Activated CD4-positive, alpha-beta T cell treated with anti-CD3 and anti-CD28 coated beads for 36 hours (primary cell): ENCODE measurements at regions of chr13 and their contacts with region 1.

Region 1: GRCh38 chr13:44484562-44485138 is 91.5 kb downstream of the TSC22D1 start:
- DNase-seq: no peak
- ATAC-seq: peak; percentile 44
- H3K4me3 Mint-ChIP-seq: peak overlapping the region; percentile 38
- H3K27ac Mint-ChIP-seq: peak overlapping the region; percentile 20
- H3K4me1 Mint-ChIP-seq: peaks cover 13% of the 10 kb centered on the region
- H3K27me3 Mint-ChIP-seq: no peaks in the 10 kb centered on the region

Region 2: GRCh38 chr13:44155422-44156293 is 329.0 kb before region 1 on chr13:
- CTCF ChIA-PET with region 1: no interaction called
- POLR2A ChIA-PET with region 1: no interaction called
- intact Hi-C with region 1: no loop called
- DNase-seq: no peak
- ATAC-seq: no peak
- H3K4me3 Mint-ChIP-seq: no peak overlapping the region
- H3K27ac Mint-ChIP-seq: no peak overlapping the region
- H3K4me1 Mint-ChIP-seq: no peaks in the 10 kb centered on the region
- H3K27me3 Mint-ChIP-seq: peaks cover 2% of the 10 kb centered on the region

Region 3: DNA sequence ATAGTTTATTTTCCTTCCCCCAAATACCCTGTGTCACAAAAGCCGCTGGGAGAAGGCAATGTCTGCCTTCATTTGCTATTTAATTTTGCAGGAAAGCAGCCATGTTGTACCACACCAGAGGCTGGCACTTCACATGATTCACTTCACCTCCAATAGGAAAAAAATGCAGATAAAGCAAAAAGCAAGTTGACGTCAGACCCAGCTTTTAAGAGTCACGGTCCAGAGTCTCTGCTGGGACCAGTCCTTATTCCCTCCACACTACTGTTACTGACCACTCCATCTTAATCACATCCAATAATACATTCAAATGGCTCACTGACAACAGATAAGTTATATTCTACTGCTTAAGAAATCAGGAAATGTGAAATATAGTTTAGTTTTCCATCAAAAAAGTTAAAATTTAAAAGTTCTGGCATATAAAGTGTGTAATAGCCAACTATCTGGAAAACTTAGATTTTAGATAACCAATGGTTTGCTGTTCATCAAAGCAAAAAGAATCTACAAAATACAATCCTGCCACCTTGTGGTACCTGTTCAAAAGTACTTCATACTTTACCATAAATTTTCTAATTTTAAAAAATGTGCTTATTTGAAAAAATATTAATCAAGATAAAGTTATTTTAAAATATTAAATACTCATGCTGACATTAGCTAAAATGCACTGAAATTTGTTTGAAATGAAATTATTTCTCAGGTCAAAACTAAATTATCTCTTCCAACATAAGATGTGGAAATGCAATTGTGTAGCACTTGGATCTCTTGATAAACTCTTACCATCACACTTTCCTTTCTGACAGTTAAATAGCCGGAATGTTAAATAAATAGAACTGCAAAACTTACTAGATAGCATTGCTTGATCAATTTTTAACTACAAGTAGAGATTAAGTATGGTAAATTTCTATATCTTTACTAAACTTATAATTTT is 13.8 kb before region 1 on chr13:
- CTCF ChIA-PET with region 1: interaction called, 22 read pairs
- POLR2A ChIA-PET with region 1: interaction called, 3 read pairs
- intact Hi-C with region 1: no loop called
- DNase-seq: no peak
- ATAC-seq: no peak
- H3K4me3 Mint-ChIP-seq: no peak overlapping the region
- H3K27ac Mint-ChIP-seq: no peak overlapping the region
- H3K4me1 Mint-ChIP-seq: no peaks in the 10 kb centered on the region
- H3K27me3 Mint-ChIP-seq: no peaks in the 10 kb centered on the region

Region 4: DNA sequence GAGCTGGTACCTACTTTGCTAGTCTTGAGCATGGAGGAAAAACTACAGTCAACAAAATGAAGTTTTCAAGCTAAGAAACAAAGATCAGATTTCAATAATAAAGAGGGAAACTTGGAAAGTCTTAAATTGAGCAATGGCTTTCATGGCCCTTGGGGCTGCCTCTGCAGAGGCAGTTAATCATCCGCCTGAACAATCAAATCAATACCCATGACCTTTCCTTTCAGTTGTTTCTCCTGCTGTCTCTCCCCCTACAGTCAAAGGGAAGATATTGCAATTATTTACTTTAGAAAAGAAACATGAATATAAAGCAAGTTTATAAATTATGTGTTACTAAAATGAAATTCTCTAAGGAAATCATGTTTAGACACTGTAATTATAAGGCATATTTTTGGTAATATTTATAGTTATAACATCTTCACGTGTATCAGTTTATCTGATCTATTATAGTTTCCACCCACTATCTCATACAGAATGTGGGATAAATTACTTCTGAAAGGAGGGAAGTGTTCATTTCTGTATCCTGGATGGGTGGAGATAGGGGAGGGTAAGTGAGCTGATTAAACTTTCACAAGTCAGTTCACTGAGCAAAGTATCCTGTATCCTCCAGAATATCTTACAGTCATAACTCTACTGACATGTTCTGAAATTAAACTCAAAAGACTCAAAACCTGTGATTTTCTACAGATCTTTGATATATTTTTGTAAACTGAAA is 163.9 kb after region 1 on chr13:
- CTCF ChIA-PET with region 1: interaction called, 4 read pairs
- POLR2A ChIA-PET with region 1: no interaction called
- intact Hi-C with region 1: loop called (anchors 1 to 2 kb)
- DNase-seq: peak; percentile 25
- ATAC-seq: peak; percentile 85
- H3K4me3 Mint-ChIP-seq: no peak overlapping the region
- H3K27ac Mint-ChIP-seq: peak overlapping the region; percentile 37
- H3K4me1 Mint-ChIP-seq: peaks cover 23% of the 10 kb centered on the region
- H3K27me3 Mint-ChIP-seq: peaks cover 26% of the 10 kb centered on the region

Region 5: DNA sequence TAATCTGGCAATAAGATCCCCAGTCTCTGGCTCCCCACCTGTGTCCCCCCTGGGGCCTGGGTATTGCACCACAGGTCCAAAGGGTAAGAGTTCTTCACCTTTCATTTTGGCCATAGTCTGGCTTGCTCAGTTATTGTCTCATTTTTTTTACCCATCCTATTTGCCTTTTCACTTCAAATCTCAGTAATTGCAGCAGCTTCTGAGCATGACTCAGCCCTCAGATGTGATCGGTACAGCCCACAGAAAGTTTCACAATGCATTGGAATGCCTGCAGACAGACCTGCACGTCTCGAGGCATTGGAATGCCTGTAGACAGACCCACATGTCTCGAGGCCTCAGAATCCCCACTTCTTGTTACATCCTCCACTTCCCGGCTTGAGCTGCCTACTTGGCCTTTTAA is 331.0 kb after region 1 on chr13:
- CTCF ChIA-PET with region 1: no interaction called
- POLR2A ChIA-PET with region 1: no interaction called
- intact Hi-C with region 1: loop called in 1 of 2 experiments (anchors 5 kb)
- DNase-seq: peak; percentile 70
- ATAC-seq: peak; percentile 85
- H3K4me3 Mint-ChIP-seq: no peak overlapping the region
- H3K27ac Mint-ChIP-seq: no peak overlapping the region
- H3K4me1 Mint-ChIP-seq: peaks cover 32% of the 10 kb centered on the region
- H3K27me3 Mint-ChIP-seq: peaks cover 22% of the 10 kb centered on the region

Region 6: GRCh38 chr13:44879463-44880058 is 394.9 kb after region 1 on chr13:
- CTCF ChIA-PET with region 1: interaction called, 27 read pairs
- POLR2A ChIA-PET with region 1: no interaction called
- intact Hi-C with region 1: loop called (anchors 1 kb)
- DNase-seq: peak; percentile 45
- ATAC-seq: no peak
- H3K4me3 Mint-ChIP-seq: no peak overlapping the region
- H3K27ac Mint-ChIP-seq: no peak overlapping the region
- H3K4me1 Mint-ChIP-seq: peaks cover 5% of the 10 kb centered on the region
- H3K27me3 Mint-ChIP-seq: peaks cover 5% of the 10 kb centered on the region

Region 7: DNA sequence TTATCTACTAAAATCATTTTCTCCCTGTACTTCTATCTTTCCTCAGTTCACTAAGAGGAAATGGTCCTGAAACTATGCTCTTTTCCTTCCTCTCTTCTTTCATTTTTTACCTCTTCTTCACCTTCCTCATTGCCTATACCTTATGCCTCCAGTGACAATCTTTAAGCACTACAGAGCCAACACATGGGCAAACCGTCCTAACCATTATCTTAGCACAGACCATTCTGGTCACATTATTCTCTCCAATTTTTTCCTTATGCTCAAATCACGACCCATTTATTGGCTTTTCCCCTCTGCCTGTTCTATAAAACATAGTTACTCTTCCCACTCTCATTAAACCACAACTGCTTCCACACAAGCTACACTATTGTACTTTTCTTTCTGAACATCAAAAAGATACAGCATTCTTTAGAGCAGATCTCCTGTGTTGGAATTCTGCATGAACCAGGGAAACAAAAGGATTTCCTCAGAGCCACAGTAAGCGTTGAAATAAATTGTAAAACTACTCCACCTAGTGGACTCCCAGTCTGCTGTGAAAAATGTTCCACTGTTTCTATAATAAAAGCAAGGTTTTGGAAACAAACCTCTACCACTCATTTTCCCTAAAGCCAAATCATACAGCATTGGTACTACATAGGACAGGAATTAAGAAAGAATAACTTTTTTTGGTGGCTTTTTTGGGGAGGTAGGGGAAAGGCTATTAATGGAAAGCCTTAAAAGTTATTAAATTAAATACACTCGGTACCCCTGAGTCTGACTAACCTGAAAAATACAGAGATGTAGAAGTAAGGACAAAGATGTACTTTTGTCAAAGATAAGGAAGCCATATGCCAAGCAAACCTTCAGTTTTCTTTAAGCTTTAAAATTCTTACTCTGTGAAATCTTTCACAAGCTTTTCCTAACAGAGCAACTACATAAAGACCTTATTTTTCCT is 485.2 kb after region 1 on chr13:
- CTCF ChIA-PET with region 1: interaction called, 11 read pairs
- POLR2A ChIA-PET with region 1: no interaction called
- intact Hi-C with region 1: loop called (anchors 1 kb)
- DNase-seq: no peak
- ATAC-seq: no peak
- H3K4me3 Mint-ChIP-seq: no peak overlapping the region
- H3K27ac Mint-ChIP-seq: no peak overlapping the region
- H3K4me1 Mint-ChIP-seq: peaks cover 2% of the 10 kb centered on the region
- H3K27me3 Mint-ChIP-seq: no peaks in the 10 kb centered on the region